GM12878 (cell line): ENCODE measurements at regions of chr18 and their contacts with region 1.

Region 1: DNA sequence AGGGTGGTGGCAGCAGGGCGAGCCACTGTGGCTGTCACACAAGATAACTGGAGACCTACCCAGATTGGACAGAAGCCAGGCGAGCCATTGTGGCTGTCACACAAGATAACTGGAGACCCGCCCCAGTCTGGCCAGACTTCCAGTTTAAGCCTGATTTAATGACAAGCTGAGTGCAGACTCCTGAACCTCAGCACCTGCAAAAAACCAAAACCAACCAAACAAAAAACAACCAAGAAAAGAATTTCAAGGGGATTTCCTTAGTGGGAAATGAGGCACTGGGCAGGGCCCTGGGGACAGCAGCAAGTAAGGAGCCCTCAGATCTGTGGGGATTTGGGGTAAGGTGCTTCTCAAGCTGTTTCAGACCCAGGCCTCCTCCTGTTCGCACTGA is 95.2 kb upstream of the BOD1L2 start:
- DNase-seq: peak; percentile 47
- ATAC-seq: peak; percentile 89
- H3K4me3 ChIP-seq: no peak overlapping the region
- H3K27ac ChIP-seq: no peak overlapping the region
- H3K4me1 ChIP-seq: peaks cover 11% of the 10 kb centered on the region
- H3K27me3 ChIP-seq: no peaks in the 10 kb centered on the region
- CTCF ChIP-seq: no peak
- EP300 ChIP-seq: peak in 1 of 2 experiments; percentile 47; a peak in 1 of 4 replicates
- POLR2A ChIP-seq: no peak
- RAD21 ChIP-seq: no peak

Region 2: GRCh38 chr18:56973487-56973886 is 78.2 kb before region 1 on chr18:
- CTCF ChIA-PET with region 1: no interaction called
- POLR2A ChIA-PET with region 1: no interaction called
- RAD21 ChIA-PET with region 1: no interaction called
- SMC1A ChIA-PET with region 1: no interaction called
- in situ Hi-C with region 1: no loop called
- intact Hi-C with region 1: no loop called
- DNase-seq: no peak
- ATAC-seq: no peak
- H3K4me3 ChIP-seq: no peak overlapping the region
- H3K27ac ChIP-seq: no peak overlapping the region
- H3K4me1 ChIP-seq: no peaks in the 10 kb centered on the region
- H3K27me3 ChIP-seq: no peaks in the 10 kb centered on the region
- CTCF ChIP-seq: no peak
- EP300 ChIP-seq: no peak
- POLR2A ChIP-seq: no peak
- RAD21 ChIP-seq: no peak

Region 3: DNA sequence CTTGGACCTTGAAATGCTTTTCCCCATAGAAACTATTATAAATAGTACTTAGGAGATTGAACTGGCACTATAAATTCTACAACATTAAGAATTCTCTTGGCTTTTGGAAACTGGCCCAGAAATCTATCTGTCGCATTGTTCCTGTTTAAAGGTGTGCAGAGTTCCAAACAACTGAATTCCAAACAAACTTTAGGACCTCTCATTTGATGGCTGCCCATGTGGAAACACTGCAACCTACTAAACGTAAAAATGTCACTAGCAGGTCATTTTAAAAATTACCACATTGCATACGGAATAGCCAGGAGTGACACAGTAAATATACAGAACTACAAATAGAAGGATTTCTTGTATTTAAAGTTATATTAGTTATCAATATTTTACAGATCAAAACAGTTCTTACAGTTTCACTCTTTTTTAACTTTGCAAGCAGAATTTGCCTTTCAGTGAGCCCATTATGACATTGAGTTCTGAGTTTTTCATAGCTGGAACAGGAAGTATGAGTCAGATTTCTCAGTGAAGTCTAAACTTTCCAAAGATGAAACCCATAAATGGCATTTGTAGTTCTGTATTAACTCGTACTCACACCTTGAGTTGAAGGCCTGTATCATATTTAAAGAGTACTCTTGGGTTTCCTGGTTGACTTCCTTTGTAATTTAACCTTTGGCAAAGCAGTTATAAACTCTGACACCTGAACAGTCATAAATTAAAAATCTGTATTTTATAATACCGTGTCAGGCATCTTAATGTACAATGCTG is 47.1 kb before region 1 on chr18:
- CTCF ChIA-PET with region 1: no interaction called
- POLR2A ChIA-PET with region 1: interaction called, 4 read pairs
- RAD21 ChIA-PET with region 1: interaction called, 10 read pairs
- SMC1A ChIA-PET with region 1: interaction called, 5 read pairs
- in situ Hi-C with region 1: no loop called
- intact Hi-C with region 1: no loop called
- DNase-seq: peak; percentile 63
- ATAC-seq: peak; percentile 97
- H3K4me3 ChIP-seq: no peak overlapping the region
- H3K27ac ChIP-seq: peak overlapping the region; percentile 71
- H3K4me1 ChIP-seq: peaks cover 16% of the 10 kb centered on the region
- H3K27me3 ChIP-seq: no peaks in the 10 kb centered on the region
- CTCF ChIP-seq: no peak
- EP300 ChIP-seq: peak in 1 of 2 experiments; percentile 26; a peak in 1 of 4 replicates
- POLR2A ChIP-seq: no peak
- RAD21 ChIP-seq: no peak

Region 4: DNA sequence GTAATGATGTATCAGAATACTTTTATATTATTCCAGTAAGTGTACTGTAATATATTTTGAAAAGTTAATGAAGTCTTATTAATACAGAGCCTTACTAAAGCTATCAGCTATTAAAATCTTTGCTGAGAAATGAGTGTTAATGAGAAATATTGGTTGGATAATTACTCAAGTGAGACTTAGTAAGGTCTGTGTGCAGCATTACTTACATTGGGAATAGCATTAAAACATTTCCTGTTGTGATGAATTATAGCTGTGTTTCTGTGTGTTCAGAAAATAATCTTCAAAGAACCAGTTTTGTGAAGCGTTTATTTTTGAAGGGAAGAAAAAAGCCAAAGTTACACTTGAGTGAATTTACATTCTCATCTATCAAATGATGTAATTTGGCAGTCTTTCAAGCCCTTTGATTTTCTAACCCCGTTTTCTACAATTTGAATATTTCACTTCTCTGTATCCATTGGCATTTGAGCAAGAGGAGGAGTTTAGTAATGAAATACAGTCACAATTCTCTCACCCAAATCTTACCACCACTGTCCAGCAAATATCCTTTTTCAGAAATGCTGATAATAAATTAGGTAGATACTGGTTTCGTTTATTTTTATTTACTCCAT is 28.3 kb before region 1 on chr18:
- CTCF ChIA-PET with region 1: interaction called, 9 read pairs
- POLR2A ChIA-PET with region 1: no interaction called
- RAD21 ChIA-PET with region 1: interaction called, 5 read pairs
- SMC1A ChIA-PET with region 1: interaction called, 14 read pairs
- in situ Hi-C with region 1: no loop called
- intact Hi-C with region 1: loop called (anchors 2 kb)
- DNase-seq: peak; percentile 55
- ATAC-seq: peak; percentile 92
- H3K4me3 ChIP-seq: 0 out of 2 replicates have a peak overlapping the region, but pooled peaks have one; percentile 5
- H3K27ac ChIP-seq: no peak overlapping the region
- H3K4me1 ChIP-seq: no peaks in the 10 kb centered on the region; the same call in 1 of the 2 replicates
- H3K27me3 ChIP-seq: no peaks in the 10 kb centered on the region
- CTCF ChIP-seq: no peak
- EP300 ChIP-seq: peak in 1 of 2 experiments; percentile 46; a peak in 1 of 4 replicates
- POLR2A ChIP-seq: no peak
- RAD21 ChIP-seq: no peak

Region 5: DNA sequence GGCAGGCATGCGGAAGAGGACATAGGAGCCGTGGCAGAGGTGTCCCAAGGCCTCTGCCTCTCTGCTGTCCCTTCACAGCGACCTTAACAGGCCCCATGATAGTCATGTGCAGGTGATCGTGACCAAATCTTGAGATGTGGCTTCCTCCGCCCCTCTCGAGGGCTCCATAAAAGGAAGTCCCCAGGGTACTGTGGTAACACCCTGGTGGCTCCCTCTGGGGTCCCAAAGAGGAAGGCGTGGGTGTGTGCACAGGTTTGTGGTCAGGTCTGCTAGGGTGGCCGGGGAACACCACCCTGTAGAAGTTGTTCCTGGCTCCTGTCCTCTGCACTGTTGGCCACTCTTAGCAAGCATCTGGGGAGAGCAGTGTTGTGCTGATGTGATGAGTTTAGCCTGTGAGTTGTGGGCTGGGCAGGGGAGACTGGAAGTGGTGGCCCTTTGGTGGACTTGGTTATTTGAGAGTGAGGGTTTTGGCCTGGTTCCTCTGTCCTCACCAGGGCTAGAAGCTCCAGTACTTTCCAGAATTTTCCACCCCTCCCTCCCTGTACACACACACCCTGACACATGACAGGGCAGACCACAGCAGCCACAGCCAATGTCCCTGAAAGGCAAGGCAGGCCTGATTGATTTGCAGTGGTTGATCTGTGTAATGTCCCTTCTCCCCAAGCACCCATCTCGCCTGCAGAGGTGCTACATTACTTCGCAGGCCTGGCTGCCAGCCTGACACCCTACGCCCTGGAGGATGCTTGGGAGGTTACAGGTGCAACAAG is 26.3 kb after region 1 on chr18:
- CTCF ChIA-PET with region 1: no interaction called
- POLR2A ChIA-PET with region 1: no interaction called
- RAD21 ChIA-PET with region 1: interaction called, 4 read pairs
- SMC1A ChIA-PET with region 1: interaction called, 4 read pairs
- in situ Hi-C with region 1: no loop called
- intact Hi-C with region 1: loop called (anchors 1 kb)
- DNase-seq: peak; percentile 93
- ATAC-seq: peak; percentile 90
- H3K4me3 ChIP-seq: no peak overlapping the region
- H3K27ac ChIP-seq: peak overlapping the region; percentile 28; the same call in 1 of the 2 replicates
- H3K4me1 ChIP-seq: peaks cover 25% of the 10 kb centered on the region
- H3K27me3 ChIP-seq: no peaks in the 10 kb centered on the region; a peak in 1 of 4 replicates
- CTCF ChIP-seq: peak; percentile 14 to 38 (median 30); a peak in 3 of 6 replicates
- EP300 ChIP-seq: peak; percentile 89 to 92
- POLR2A ChIP-seq: no peak
- RAD21 ChIP-seq: peak; percentile 28; the same call in 1 of the 2 replicates

Region 6: DNA sequence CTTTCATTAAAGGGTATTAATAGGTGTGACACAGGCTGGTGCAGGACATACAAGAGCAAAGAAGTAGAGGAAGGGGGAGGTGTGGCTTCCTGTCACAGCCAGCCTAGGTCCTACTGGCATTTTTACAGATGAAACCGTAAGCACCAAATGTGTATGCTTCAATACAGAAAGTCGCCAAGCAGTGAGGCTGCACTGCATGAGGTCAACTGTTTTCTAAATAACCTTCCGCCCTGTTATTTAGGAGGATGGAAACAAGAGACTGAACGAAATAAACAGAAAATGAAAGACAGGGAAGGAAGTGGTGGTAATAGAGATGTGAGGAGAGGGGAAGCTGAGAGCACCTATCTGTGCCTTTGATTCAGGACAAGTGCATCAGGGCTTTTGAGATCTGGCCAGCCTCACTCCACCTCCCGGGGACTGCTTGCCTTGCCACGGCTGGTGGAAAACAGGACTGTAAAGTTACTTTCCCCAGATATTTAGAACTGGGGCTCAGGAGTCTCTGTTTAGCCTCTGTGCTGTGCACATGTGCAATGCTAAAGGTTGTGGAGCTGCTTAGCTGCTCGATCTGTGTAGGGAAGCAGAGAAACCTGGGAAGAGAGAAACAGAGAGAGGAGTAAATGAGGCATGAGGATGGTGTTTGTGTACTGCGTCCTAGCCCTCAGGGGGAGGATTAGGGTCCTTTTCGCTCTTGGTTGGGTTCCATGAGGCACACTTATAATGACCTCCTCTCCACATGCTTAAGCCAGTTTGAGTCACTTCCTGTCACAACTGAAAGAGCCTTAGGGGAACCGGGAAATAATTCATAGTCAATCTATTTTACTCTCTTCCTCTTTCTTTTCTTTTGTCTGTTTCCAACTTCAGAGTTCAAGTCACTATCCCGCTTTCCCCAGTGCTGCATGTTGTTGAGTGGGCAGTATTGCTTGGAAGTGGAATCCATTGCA is 33.0 kb after region 1 on chr18:
- CTCF ChIA-PET with region 1: interaction called, 3 read pairs
- POLR2A ChIA-PET with region 1: no interaction called
- RAD21 ChIA-PET with region 1: interaction called, 3 read pairs
- SMC1A ChIA-PET with region 1: interaction called, 3 read pairs
- in situ Hi-C with region 1: no loop called
- intact Hi-C with region 1: loop called (anchors 2 kb)
- DNase-seq: peak; percentile 62
- ATAC-seq: peak; percentile 86
- H3K4me3 ChIP-seq: peak overlapping the region; percentile 53; the same call in 1 of the 2 replicates
- H3K27ac ChIP-seq: peak overlapping the region; percentile 45
- H3K4me1 ChIP-seq: peaks cover 25% of the 10 kb centered on the region
- H3K27me3 ChIP-seq: no peaks in the 10 kb centered on the region; a peak in 1 of 4 replicates
- CTCF ChIP-seq: no peak
- EP300 ChIP-seq: peak; percentile 9 to 48; a peak in 2 of 4 replicates
- POLR2A ChIP-seq: no peak
- RAD21 ChIP-seq: no peak

Region 7: DNA sequence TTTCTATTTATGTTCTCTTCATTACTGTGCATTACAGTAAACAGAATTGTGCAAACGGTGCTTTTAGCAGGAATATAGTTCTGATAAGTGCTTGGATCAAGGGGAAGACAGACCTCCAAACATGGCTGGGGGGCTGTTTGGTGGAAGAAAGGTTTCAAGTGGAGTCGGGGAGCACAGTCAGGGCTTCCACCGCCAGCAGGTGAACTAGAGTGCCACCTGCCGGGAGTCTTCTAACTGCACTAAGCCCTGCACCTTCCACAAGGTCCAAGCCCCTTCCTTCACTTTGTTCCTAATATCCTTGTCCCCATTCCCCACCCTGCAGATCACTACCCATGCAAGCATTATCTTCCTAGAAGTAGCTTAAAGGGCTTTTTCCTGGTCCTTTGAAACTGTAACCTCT is 394.7 kb after region 1 on chr18:
- CTCF ChIA-PET with region 1: interaction called, 9 read pairs
- POLR2A ChIA-PET with region 1: no interaction called
- RAD21 ChIA-PET with region 1: interaction called, 7 read pairs
- SMC1A ChIA-PET with region 1: interaction called, 3 read pairs
- in situ Hi-C with region 1: no loop called
- intact Hi-C with region 1: loop called (anchors 2 kb)
- DNase-seq: no peak
- ATAC-seq: peak; percentile 90
- H3K4me3 ChIP-seq: no peak overlapping the region
- H3K27ac ChIP-seq: no peak overlapping the region
- H3K4me1 ChIP-seq: no peaks in the 10 kb centered on the region
- H3K27me3 ChIP-seq: peaks cover 2 to 10% of the 10 kb centered on the region in 2 experiments
- CTCF ChIP-seq: peak; percentile 77 to 82 (median 79)
- EP300 ChIP-seq: no peak
- POLR2A ChIP-seq: no peak
- RAD21 ChIP-seq: peak; percentile 70

Region 8: GRCh38 chr18:57561728-57562423 is 510.2 kb after region 1 on chr18:
- CTCF ChIA-PET with region 1: interaction called, 4 read pairs
- POLR2A ChIA-PET with region 1: no interaction called
- RAD21 ChIA-PET with region 1: no interaction called
- SMC1A ChIA-PET with region 1: no interaction called
- in situ Hi-C with region 1: no loop called
- intact Hi-C with region 1: loop called (anchors 5 kb)
- DNase-seq: no peak
- ATAC-seq: peak; percentile 77
- H3K4me3 ChIP-seq: no peak overlapping the region
- H3K27ac ChIP-seq: no peak overlapping the region
- H3K4me1 ChIP-seq: no peaks in the 10 kb centered on the region
- H3K27me3 ChIP-seq: no peaks in the 10 kb centered on the region
- CTCF ChIP-seq: peak; percentile 61 to 73 (median 71)
- EP300 ChIP-seq: no peak
- POLR2A ChIP-seq: no peak
- RAD21 ChIP-seq: peak; percentile 85

Region 9: GRCh38 chr18:57595347-57595746 is 543.7 kb after region 1 on chr18:
- CTCF ChIA-PET with region 1: no interaction called
- POLR2A ChIA-PET with region 1: no interaction called
- RAD21 ChIA-PET with region 1: no interaction called
- SMC1A ChIA-PET with region 1: no interaction called
- in situ Hi-C with region 1: no loop called
- intact Hi-C with region 1: no loop called
- DNase-seq: no peak
- ATAC-seq: no peak
- H3K4me3 ChIP-seq: no peak overlapping the region
- H3K27ac ChIP-seq: no peak overlapping the region
- H3K4me1 ChIP-seq: no peaks in the 10 kb centered on the region
- H3K27me3 ChIP-seq: no peaks in the 10 kb centered on the region
- CTCF ChIP-seq: no peak
- EP300 ChIP-seq: no peak
- POLR2A ChIP-seq: no peak
- RAD21 ChIP-seq: no peak